ENCODE measurements at regions of chr2 and their contacts with region 1.

Region 1: GRCh38 chr2:97740590-97741182 is 27.3 kb downstream of the ZAP70 start:
- DNase-seq: peak; percentile 73
- ATAC-seq: peak; percentile 25
- H3K4me3 Mint-ChIP-seq: no peak overlapping the region
- H3K27ac Mint-ChIP-seq: peak overlapping the region; percentile 59
- H3K4me1 Mint-ChIP-seq: peaks cover 43% of the 10 kb centered on the region
- H3K27me3 Mint-ChIP-seq: no peaks in the 10 kb centered on the region

Region 2: GRCh38 chr2:97728091-97728731 is 12.5 kb before region 1 on chr2:
- CTCF ChIA-PET with region 1: interaction called, 36 read pairs
- POLR2A ChIA-PET with region 1: interaction called, 3 read pairs
- intact Hi-C with region 1: no loop called
- DNase-seq: peak; percentile 38
- ATAC-seq: peak; percentile 81
- H3K4me3 Mint-ChIP-seq: no peak overlapping the region
- H3K27ac Mint-ChIP-seq: peak overlapping the region; percentile 63
- H3K4me1 Mint-ChIP-seq: peaks cover 56% of the 10 kb centered on the region
- H3K27me3 Mint-ChIP-seq: no peaks in the 10 kb centered on the region

Region 3: GRCh38 chr2:97849881-97850528 is 109.3 kb after region 1 on chr2:
- CTCF ChIA-PET with region 1: no interaction called
- POLR2A ChIA-PET with region 1: no interaction called
- intact Hi-C with region 1: no loop called
- DNase-seq: no peak
- ATAC-seq: peak; percentile 86
- H3K4me3 Mint-ChIP-seq: no peak overlapping the region
- H3K27ac Mint-ChIP-seq: peak overlapping the region; percentile 34
- H3K4me1 Mint-ChIP-seq: peaks cover 41% of the 10 kb centered on the region
- H3K27me3 Mint-ChIP-seq: no peaks in the 10 kb centered on the region

Region 4: DNA sequence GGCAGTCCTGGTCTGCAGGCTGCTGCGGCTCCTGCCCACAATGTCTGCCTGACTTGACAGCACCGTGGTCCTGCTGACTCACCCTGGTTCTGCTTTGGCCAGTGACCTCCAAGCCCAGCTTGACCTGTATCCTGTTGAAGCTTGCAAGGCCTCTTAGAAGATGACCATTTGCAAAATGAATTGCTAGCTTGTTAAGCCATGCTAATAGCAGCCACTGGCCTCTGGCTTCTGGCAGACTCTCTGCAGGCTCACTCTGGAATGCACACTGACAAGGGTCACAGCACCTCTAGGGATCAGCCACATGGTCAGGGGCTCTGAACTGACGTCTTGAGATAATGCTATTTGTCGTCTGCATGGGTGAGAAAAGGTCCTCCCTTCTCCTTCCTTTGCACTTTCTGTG is 631.4 kb after region 1 on chr2:
- CTCF ChIA-PET with region 1: no interaction called
- POLR2A ChIA-PET with region 1: no interaction called
- intact Hi-C with region 1: no loop called
- DNase-seq: no peak
- ATAC-seq: no peak
- H3K4me3 Mint-ChIP-seq: no peak overlapping the region
- H3K27ac Mint-ChIP-seq: no peak overlapping the region
- H3K4me1 Mint-ChIP-seq: no peaks in the 10 kb centered on the region
- H3K27me3 Mint-ChIP-seq: peaks cover 17% of the 10 kb centered on the region

Region 5: GRCh38 chr2:98385050-98385699 is 644.5 kb after region 1 on chr2:
- CTCF ChIA-PET with region 1: interaction called, 9 read pairs
- POLR2A ChIA-PET with region 1: no interaction called
- intact Hi-C with region 1: loop called in 1 of 2 experiments (anchors 10 kb)
- DNase-seq: peak; percentile 88
- ATAC-seq: peak; percentile 89
- H3K4me3 Mint-ChIP-seq: no peak overlapping the region
- H3K27ac Mint-ChIP-seq: no peak overlapping the region
- H3K4me1 Mint-ChIP-seq: peaks cover 3% of the 10 kb centered on the region
- H3K27me3 Mint-ChIP-seq: peaks cover 5% of the 10 kb centered on the region

Measured in activated CD4-positive, alpha-beta T cell treated with anti-CD3 and anti-CD28 coated beads for 36 hours (primary cell).